ENCODE measurements at regions of chr15 and their contacts with region 1.

Region 1: GRCh38 chr15:74635228-74635627 is 19.6 kb downstream of the CLK3 start:
- DNase-seq: peak; percentile 68 to 70 (median 68)
- H3K4me3 ChIP-seq: no peak overlapping the region
- H3K4me3 Mint-ChIP-seq: no peak overlapping the region
- H3K27ac ChIP-seq: no peak overlapping the region
- H3K27ac Mint-ChIP-seq: peak overlapping the region in 3 of 7 donors; percentile 5 to 79 (median 14)
- H3K4me1 ChIP-seq: no peaks in the 10 kb centered on the region
- H3K4me1 Mint-ChIP-seq: peaks cover 1 to 6% (median 4%) of the 10 kb centered on the region in 4 donors
- H3K27me3 ChIP-seq: no peaks in the 10 kb centered on the region
- H3K27me3 Mint-ChIP-seq: no peaks in the 10 kb centered on the region

Region 2: GRCh38 chr15:74373731-74374647 is 261.2 kb before region 1 on chr15:
- CTCF ChIA-PET with region 1: interaction called, 15 read pairs
- POLR2A ChIA-PET with region 1: no interaction called
- intact Hi-C with region 1: loop called (anchors 1 kb)
- DNase-seq: peak; percentile 90 to 96 (median 91)
- H3K4me3 ChIP-seq: peak overlapping the region; percentile 82 to 93
- H3K4me3 Mint-ChIP-seq: peak overlapping the region; percentile 78 to 88 (median 86)
- H3K27ac ChIP-seq: peak overlapping the region; percentile 38
- H3K27ac Mint-ChIP-seq: peak overlapping the region; percentile 46 to 88 (median 67)
- H3K4me1 ChIP-seq: peaks cover 19% of the 10 kb centered on the region
- H3K4me1 Mint-ChIP-seq: peaks cover 6 to 24% (median 13%) of the 10 kb centered on the region in 4 donors
- H3K27me3 ChIP-seq: no peaks in the 10 kb centered on the region
- H3K27me3 Mint-ChIP-seq: peaks cover 8% of the 10 kb centered on the region in 2 donors

Region 3: GRCh38 chr15:74615508-74616365 is 19.5 kb before region 1 on chr15 and contains the start of gene CLK3:
- CTCF ChIA-PET with region 1: interaction called, 84 read pairs
- POLR2A ChIA-PET with region 1: interaction called, 21 read pairs
- intact Hi-C with region 1: no loop called
- DNase-seq: peak; percentile 95 to 97 (median 96)
- H3K4me3 ChIP-seq: peak within 1 kb of the TSS; percentile 98 to 100
- H3K4me3 Mint-ChIP-seq: peak within 1 kb of the TSS; percentile 92 to 98 (median 94)
- H3K27ac ChIP-seq: peak within 1 kb of the TSS; percentile 99
- H3K27ac Mint-ChIP-seq: peak within 1 kb of the TSS; percentile 98 to 99 (median 98)
- H3K4me1 ChIP-seq: peaks cover 44% of the 10 kb centered on the region
- H3K4me1 Mint-ChIP-seq: peaks cover 28 to 59% (median 31%) of the 10 kb centered on the region in 4 donors
- H3K27me3 ChIP-seq: no peaks in the 10 kb centered on the region
- H3K27me3 Mint-ChIP-seq: no peaks in the 10 kb centered on the region
- total RNA-seq, gene CLK3: 163 to 167 TPM

Region 4: GRCh38 chr15:74680456-74680855 is 45.2 kb after region 1 on chr15:
- CTCF ChIA-PET with region 1: no interaction called
- POLR2A ChIA-PET with region 1: no interaction called
- intact Hi-C with region 1: no loop called
- DNase-seq: no peak
- H3K4me3 ChIP-seq: no peak overlapping the region
- H3K4me3 Mint-ChIP-seq: no peak overlapping the region
- H3K27ac ChIP-seq: no peak overlapping the region
- H3K27ac Mint-ChIP-seq: peak overlapping the region in 2 of 7 donors; percentile 31 to 32
- H3K4me1 ChIP-seq: no peaks in the 10 kb centered on the region
- H3K4me1 Mint-ChIP-seq: peaks cover 5 to 18% (median 14%) of the 10 kb centered on the region in 4 donors
- H3K27me3 ChIP-seq: no peaks in the 10 kb centered on the region
- H3K27me3 Mint-ChIP-seq: no peaks in the 10 kb centered on the region

Region 5: GRCh38 chr15:74763416-74763815 is 128.2 kb after region 1 on chr15:
- CTCF ChIA-PET with region 1: interaction called, 389 read pairs
- POLR2A ChIA-PET with region 1: interaction called, 8 read pairs
- intact Hi-C with region 1: no loop called
- DNase-seq: no peak
- H3K4me3 ChIP-seq: no peak overlapping the region
- H3K4me3 Mint-ChIP-seq: no peak overlapping the region
- H3K27ac ChIP-seq: no peak overlapping the region
- H3K27ac Mint-ChIP-seq: no peak overlapping the region
- H3K4me1 ChIP-seq: no peaks in the 10 kb centered on the region
- H3K4me1 Mint-ChIP-seq: no peaks in the 10 kb centered on the region
- H3K27me3 ChIP-seq: no peaks in the 10 kb centered on the region
- H3K27me3 Mint-ChIP-seq: peaks cover 0 to 1% of the 10 kb centered on the region in 2 donors

Region 6: DNA sequence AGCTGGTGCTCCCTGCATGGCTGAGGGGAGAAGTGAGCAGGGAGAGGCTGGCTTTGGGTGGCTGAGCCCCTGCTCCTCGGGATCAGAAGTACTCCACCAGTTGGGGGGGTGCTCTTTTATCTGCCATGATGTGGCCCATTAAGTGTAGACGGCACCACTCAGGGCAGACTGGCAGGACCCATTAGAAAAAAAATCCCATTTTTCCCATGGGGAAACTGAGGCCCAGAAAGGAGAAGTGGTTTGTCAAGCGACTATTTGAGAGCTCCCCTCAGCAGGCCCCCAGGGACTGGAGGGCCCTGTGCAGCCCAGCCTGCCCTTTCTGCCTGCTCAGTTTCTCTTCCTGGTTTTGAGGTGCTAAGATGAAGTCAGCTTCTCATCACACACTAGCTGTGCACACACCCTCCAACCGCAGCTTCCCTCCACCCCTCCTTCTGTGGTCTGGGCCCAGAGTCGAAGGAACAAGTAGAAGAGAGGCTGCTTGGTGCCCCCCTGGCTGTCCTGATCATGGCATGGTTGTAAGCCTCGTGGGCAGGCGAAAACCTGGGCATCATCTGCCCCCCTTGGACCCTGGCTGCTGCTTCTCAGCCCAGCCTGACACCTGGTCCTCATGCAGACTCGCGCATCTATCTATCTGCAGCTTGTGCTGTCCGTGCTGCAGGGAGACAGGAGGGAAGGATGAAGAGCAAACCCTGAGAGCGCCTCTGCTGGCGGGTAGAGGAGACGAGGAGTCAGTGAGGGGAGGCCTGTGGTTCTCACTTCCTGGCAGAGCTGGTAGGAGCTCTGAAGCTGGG is 152.2 kb after region 1 on chr15:
- CTCF ChIA-PET with region 1: interaction called, 77 read pairs
- POLR2A ChIA-PET with region 1: interaction called, 3 read pairs
- intact Hi-C with region 1: no loop called
- DNase-seq: peak; percentile 94 to 99 (median 96)
- H3K4me3 ChIP-seq: peak overlapping the region; percentile 55 to 69
- H3K4me3 Mint-ChIP-seq: peak overlapping the region; percentile 85 to 96 (median 92)
- H3K27ac ChIP-seq: peak overlapping the region; percentile 86
- H3K27ac Mint-ChIP-seq: peak overlapping the region; percentile 95 to 99 (median 98)
- H3K4me1 ChIP-seq: peaks cover 89% of the 10 kb centered on the region
- H3K4me1 Mint-ChIP-seq: peaks cover 39 to 97% (median 66%) of the 10 kb centered on the region in 4 donors
- H3K27me3 ChIP-seq: no peaks in the 10 kb centered on the region
- H3K27me3 Mint-ChIP-seq: no peaks in the 10 kb centered on the region

Region 7: GRCh38 chr15:74835307-74835823 is 200.1 kb after region 1 on chr15:
- CTCF ChIA-PET with region 1: interaction called, 13 read pairs
- POLR2A ChIA-PET with region 1: no interaction called
- intact Hi-C with region 1: loop called (anchors 5 kb)
- DNase-seq: peak in 3 of 5 donors; percentile 16 to 38 (median 24)
- H3K4me3 ChIP-seq: no peak overlapping the region
- H3K4me3 Mint-ChIP-seq: no peak overlapping the region
- H3K27ac ChIP-seq: no peak overlapping the region
- H3K27ac Mint-ChIP-seq: peak overlapping the region in 1 of 7 donors; percentile 5
- H3K4me1 ChIP-seq: no peaks in the 10 kb centered on the region
- H3K4me1 Mint-ChIP-seq: peaks cover 0 to 5% (median 3%) of the 10 kb centered on the region in 4 donors
- H3K27me3 ChIP-seq: no peaks in the 10 kb centered on the region
- H3K27me3 Mint-ChIP-seq: no peaks in the 10 kb centered on the region

Region 8: GRCh38 chr15:74937596-74938296 is 302.5 kb after region 1 on chr15 and contains the start of gene COX5A:
- CTCF ChIA-PET with region 1: interaction called, 10 read pairs
- POLR2A ChIA-PET with region 1: no interaction called
- intact Hi-C with region 1: no loop called
- DNase-seq: peak; percentile 92 to 95 (median 93)
- H3K4me3 ChIP-seq: peak within 1 kb of the TSS; percentile 41 to 96
- H3K4me3 Mint-ChIP-seq: peak within 1 kb of the TSS; percentile 88 to 95 (median 94)
- H3K27ac ChIP-seq: peak within 1 kb of the TSS; percentile 79
- H3K27ac Mint-ChIP-seq: peak within 1 kb of the TSS; percentile 88 to 96 (median 92)
- H3K4me1 ChIP-seq: peaks cover 38% of the 10 kb centered on the region
- H3K4me1 Mint-ChIP-seq: peaks cover 21 to 40% (median 28%) of the 10 kb centered on the region in 4 donors
- H3K27me3 ChIP-seq: no peaks in the 10 kb centered on the region
- H3K27me3 Mint-ChIP-seq: no peaks in the 10 kb centered on the region
- total RNA-seq, gene COX5A: 66.8 to 74.4 TPM

Measured in CD4-positive, alpha-beta memory T cell (primary cell).